PC-9 (cell line): ENCODE measurements at regions of chr6 and their contacts with region 1.

Region 1: GRCh38 chr6:159935633-159936032 is 33.2 kb upstream of the IGF2R start:
- DNase-seq: no peak
- H3K4me3 ChIP-seq: no peak overlapping the region
- H3K27ac ChIP-seq: no peak overlapping the region
- H3K4me1 ChIP-seq: no peaks in the 10 kb centered on the region
- H3K27me3 ChIP-seq: peaks cover 79% of the 10 kb centered on the region
- CTCF ChIP-seq: no peak

Region 2: DNA sequence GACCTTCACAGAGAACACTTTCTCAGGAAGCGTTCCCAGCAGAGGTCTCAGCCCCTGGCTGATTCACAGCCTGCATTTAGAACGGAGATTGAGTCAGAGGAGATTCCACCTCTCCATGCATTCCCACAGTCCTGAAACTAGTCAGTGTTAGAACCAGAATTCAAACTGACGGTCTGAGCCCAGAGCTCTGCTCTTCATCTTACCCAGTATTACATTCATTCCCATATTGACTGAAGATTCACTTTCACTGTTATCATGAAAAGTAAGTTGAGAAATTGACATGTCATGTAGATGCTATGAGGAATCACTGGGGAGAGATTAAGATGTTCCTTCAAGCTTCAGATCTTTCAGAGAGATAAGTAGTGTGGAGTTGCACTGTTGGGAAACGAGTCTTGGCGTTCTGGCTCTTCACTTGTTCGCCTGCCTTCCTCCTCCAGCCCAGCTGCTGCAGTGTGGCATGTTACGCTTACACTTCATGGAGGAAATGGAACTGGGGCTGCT is 16.6 kb before region 1 on chr6:
- CTCF ChIA-PET with region 1: no interaction called
- POLR2A ChIA-PET with region 1: no interaction called
- intact Hi-C with region 1: loop called (anchors 2 kb)
- DNase-seq: no peak
- H3K4me3 ChIP-seq: no peak overlapping the region
- H3K27ac ChIP-seq: no peak overlapping the region
- H3K4me1 ChIP-seq: no peaks in the 10 kb centered on the region
- H3K27me3 ChIP-seq: peaks cover 45% of the 10 kb centered on the region
- CTCF ChIP-seq: no peak